HAP-1 (cell line): ENCODE measurements at regions of chr5 and their contacts with region 1.

Region 1: DNA sequence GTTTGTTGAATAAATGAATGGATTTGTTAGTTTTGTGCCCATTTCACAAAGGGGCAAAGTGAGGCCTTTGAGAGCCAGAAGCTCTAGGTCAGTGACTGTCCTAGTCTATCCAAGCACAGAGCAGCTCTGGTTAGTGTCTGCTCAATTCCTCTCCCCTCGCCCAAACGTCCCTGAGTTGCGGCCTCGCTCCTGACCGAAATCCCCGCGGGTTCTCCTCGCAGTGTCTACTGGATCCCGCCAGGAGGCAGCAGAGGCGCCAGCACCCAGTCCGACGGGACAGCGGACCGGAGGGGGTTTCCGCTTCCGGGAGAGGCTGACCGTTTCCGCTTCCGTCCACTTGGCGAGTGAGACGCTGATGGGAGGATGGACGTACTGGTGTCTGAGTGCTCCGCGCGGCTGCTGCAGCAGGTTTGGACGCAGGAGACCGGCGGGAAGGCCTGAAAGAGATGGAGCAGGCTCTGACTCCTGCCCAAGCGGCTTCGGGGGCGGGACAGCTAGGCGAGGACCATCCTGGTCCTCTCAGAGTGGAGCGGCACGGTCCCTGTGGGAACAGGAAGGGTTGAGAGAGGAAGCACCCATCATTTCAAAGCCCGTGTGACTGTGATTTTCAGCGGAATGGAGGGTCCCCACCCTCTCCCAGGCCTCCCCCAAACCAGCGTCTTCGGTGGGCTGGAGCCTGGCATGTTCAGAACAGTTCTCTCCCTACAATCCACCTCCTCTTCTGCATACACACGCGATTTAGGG is at the start of gene RARS1:
- DNase-seq: peak; percentile 91 to 95
- H3K4me3 ChIP-seq: peak within 1 kb of the TSS; percentile 98
- H3K4me1 ChIP-seq: peaks cover 3% of the 10 kb centered on the region
- H3K27me3 ChIP-seq: no peaks in the 10 kb centered on the region

Region 2: GRCh38 chr5:169583424-169584204 is 1097.3 kb after region 1 on chr5 and contains the start of gene SPDL1:
- in situ Hi-C with region 1: loop called (anchors 25 kb)
- DNase-seq: peak; percentile 90 to 95
- H3K4me3 ChIP-seq: peak within 1 kb of the TSS; percentile 71
- H3K4me1 ChIP-seq: peaks cover 7% of the 10 kb centered on the region
- H3K27me3 ChIP-seq: peaks cover 3% of the 10 kb centered on the region; the same call in 1 of the 2 replicates